OCI-LY7 (cell line): ENCODE measurements at regions of chr4 and their contacts with region 1.

Region 1: DNA sequence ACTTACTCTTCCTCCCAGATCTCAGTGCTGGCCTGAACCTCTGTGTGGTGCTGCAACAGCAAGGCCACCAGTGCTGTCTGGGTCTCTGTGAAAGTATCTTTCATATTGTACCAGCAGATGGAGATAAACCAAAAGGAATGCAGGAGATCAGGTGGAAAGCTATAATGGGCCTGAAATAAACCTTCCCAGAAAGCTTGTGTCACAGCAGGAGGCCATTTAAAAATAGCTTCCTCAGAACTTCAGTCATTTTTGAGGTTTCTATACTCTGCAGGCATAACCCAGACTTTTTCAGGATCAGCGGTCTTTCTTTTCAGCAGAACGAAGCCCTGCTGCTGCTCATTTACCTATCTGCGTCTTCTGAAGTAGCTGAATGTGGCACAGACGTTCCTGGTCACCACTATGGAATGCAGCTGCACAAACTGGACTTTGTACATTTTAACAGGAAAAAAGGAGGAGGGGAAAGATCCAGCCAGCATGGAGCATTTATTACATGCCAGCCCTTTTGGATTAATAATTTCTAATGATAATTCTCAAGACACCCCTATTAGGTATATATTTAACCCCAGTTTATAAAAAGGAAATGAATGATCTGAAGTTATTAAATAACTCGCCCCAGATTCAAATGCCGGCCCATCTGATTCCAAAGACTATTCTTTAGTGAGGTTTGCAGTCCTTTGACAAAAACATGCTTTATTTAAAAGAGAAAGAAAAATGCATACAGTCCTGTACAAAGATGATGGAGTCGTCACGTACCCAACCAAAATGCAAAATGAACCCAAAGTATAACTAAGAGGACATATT is 119.7 kb downstream of the NFKB1 start:
- DNase-seq: peak; percentile 59
- H3K4me3 ChIP-seq: no peak overlapping the region
- H3K27ac ChIP-seq: no peak overlapping the region
- H3K4me1 ChIP-seq: peaks cover 5% of the 10 kb centered on the region
- CTCF ChIP-seq: peak; percentile 77

Region 2: DNA sequence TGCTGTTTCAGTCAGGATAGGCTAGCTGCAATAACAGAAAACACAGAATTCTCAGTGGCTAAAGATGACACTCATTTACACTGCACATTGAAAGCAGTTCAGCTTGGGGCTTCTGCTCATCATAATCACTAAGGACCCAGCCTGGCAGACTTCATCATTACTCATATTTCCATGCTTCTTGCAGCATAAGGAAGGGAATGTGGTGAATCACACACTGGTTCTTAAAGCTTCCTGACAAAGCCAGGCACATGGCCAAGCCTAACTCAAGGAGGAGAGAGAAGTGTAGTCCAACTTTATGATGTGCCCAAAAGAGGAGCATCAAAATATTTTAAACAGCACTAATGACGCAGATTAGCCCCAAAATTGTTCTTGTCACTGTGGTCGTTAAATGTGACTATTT is 643.8 kb before region 1 on chr4:
- CTCF ChIA-PET with region 1: no interaction called
- POLR2A ChIA-PET with region 1: no interaction called
- intact Hi-C with region 1: no loop called
- DNase-seq: no peak
- H3K4me3 ChIP-seq: no peak overlapping the region
- H3K27ac ChIP-seq: no peak overlapping the region
- H3K4me1 ChIP-seq: no peaks in the 10 kb centered on the region
- CTCF ChIP-seq: no peak

Region 3: DNA sequence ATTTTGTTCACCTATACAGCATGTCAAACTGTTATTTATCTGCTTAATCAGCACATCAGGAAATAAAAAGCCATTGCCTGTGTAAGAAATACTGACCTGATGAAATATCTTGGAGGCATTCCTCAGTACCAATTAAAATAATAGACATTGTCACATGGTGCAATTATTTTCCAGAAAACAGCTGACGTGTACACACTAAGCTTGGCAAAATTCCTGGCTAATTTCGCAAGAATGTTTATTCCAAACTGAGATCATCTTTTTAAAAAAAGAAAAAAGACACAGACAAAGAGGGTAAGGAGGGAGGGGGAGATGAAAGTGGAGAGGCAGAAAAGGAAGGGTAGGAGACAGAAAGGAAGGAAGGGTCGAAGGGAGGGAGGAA is 181.7 kb before region 1 on chr4:
- CTCF ChIA-PET with region 1: no interaction called
- POLR2A ChIA-PET with region 1: no interaction called
- intact Hi-C with region 1: loop called (anchors 2 kb)
- DNase-seq: no peak
- H3K4me3 ChIP-seq: no peak overlapping the region
- H3K27ac ChIP-seq: no peak overlapping the region
- H3K4me1 ChIP-seq: no peaks in the 10 kb centered on the region
- CTCF ChIP-seq: no peak

Region 4: DNA sequence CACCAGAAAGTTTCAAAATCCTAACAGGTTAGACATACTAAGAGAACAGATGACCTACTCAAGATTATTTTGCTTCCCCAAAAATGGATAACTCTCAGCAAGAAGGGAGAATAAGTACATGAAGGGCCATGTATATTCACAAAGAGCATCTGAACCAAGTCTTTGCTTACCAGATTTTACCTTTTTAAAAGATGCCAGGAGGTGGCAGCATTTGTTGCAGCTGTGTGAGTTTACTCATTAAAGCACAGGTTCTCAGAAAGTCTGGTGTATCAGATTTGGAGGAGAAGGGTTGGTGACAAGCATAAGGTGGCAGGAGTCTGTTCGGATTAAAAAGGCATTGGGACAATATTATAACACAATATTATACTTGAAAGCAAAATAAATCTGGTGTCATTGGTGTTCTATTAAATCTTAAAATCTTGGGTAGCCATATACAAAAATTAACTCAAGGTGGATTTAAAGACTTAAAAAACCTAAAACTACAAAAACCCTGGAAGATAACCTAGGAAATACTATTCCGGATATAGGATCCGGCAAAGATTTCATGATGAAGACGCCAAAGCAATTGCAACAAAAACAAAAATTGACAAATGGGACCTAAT is 171.0 kb before region 1 on chr4:
- CTCF ChIA-PET with region 1: no interaction called
- POLR2A ChIA-PET with region 1: no interaction called
- intact Hi-C with region 1: loop called (anchors 2 kb)
- DNase-seq: peak; percentile 68
- H3K4me3 ChIP-seq: no peak overlapping the region
- H3K27ac ChIP-seq: no peak overlapping the region
- H3K4me1 ChIP-seq: no peaks in the 10 kb centered on the region
- CTCF ChIP-seq: peak; percentile 87

Region 5: GRCh38 chr4:103008875-103009729 is 388.2 kb after region 1 on chr4:
- CTCF ChIA-PET with region 1: no interaction called
- POLR2A ChIA-PET with region 1: interaction called, 3 read pairs
- intact Hi-C with region 1: loop called (anchors 1 kb)
- DNase-seq: peak; percentile 75
- H3K4me3 ChIP-seq: no peak overlapping the region
- H3K27ac ChIP-seq: no peak overlapping the region
- H3K4me1 ChIP-seq: no peaks in the 10 kb centered on the region
- CTCF ChIP-seq: peak; percentile 91